ENCODE measurements at regions of chr12 and their contacts with region 1.

Region 1: DNA sequence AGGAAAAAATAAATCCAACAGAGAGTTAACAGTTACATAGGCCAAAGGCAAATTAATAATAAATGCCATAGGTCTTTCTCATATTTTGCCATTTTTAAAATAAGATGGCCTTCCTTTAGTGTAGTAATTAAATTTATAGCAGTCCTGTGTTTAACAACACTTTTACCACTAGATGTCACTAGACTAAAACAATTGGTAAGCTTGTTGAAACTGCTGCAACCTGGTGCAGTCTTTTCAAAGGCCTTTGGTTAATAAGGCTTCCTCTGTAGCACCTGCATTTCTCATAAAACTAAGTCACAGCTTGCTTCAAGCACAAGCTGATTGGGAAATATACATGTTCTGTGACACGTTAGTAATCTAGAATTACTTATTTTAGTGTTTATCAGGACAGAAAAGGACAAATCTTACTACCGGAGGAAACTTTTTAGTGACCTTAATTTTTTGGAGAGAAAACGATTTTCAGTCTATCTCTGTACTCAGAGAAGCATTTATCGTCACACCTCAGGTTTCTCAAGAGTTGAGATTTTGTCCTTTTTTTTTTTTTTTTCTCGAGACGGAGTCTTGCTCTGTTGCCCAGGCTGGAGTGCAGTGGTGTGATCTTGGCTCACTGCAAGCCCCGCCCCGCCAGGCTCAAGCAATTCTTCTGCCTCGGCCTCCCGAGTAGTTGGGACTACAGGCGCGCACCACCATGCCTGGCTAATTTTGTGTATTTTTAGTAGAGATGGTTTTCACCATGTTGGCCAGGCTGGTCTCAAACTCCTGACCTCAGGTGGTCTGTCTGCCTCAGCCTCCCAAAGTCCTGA is 20.0 kb downstream of the BORCS5 start:
- DNase-seq: no peak
- H3K4me3 ChIP-seq: no peak overlapping the region
- H3K27ac ChIP-seq: no peak overlapping the region
- H3K4me1 ChIP-seq: peaks cover 6% of the 10 kb centered on the region
- H3K27me3 ChIP-seq: no peaks in the 10 kb centered on the region
- CTCF ChIP-seq: peak; percentile 72

Region 2: GRCh38 chr12:12467688-12468261 is 90.9 kb after region 1 on chr12:
- intact Hi-C with region 1: no loop called
- DNase-seq: no peak
- H3K4me3 ChIP-seq: no peak overlapping the region
- H3K27ac ChIP-seq: no peak overlapping the region
- H3K4me1 ChIP-seq: no peaks in the 10 kb centered on the region
- H3K27me3 ChIP-seq: no peaks in the 10 kb centered on the region
- CTCF ChIP-seq: no peak

Region 3: GRCh38 chr12:12606781-12607589 is 230.1 kb after region 1 on chr12:
- intact Hi-C with region 1: no loop called
- DNase-seq: no peak
- H3K4me3 ChIP-seq: no peak overlapping the region
- H3K27ac ChIP-seq: no peak overlapping the region
- H3K4me1 ChIP-seq: no peaks in the 10 kb centered on the region
- H3K27me3 ChIP-seq: no peaks in the 10 kb centered on the region
- CTCF ChIP-seq: no peak

Region 4: DNA sequence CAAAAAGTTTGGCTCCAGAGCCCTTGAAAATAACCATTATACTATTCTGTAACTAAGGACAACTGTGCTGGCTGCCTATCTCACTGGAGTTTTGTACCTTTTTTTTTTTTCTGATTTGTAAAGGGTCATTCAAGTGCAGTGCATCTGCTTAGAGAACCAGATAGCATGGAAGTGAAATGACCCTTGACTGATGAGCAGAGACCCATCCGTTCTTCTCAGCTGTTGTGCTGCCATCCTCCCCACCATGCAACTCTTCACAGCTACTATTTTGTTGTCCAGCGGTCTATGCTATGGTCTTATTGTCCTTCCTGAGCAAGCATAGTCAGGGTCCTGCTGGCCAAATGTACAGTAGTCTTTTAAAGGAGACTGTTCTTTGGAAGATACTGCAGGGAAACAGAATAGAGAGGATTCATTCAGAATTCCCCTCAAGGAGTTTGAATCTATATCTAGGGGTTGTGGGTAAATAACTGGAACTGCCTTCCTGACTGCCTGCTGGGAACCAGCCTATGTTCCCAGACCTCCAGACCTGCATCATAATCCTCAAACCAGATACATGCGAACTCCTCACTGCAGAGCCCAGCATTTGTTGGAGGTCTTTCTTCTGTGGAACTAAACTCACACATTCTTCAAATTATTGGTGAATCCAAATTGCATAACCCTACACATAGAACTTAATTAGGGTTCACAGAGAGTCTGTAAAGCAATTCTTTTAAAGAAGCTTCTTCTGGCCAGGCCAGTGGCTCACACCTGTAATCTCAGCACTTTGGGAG is 278.0 kb after region 1 on chr12:
- intact Hi-C with region 1: loop called (anchors 5 kb)
- DNase-seq: no peak
- H3K4me3 ChIP-seq: no peak overlapping the region
- H3K27ac ChIP-seq: no peak overlapping the region
- H3K4me1 ChIP-seq: no peaks in the 10 kb centered on the region
- H3K27me3 ChIP-seq: no peaks in the 10 kb centered on the region
- CTCF ChIP-seq: no peak

Region 5: DNA sequence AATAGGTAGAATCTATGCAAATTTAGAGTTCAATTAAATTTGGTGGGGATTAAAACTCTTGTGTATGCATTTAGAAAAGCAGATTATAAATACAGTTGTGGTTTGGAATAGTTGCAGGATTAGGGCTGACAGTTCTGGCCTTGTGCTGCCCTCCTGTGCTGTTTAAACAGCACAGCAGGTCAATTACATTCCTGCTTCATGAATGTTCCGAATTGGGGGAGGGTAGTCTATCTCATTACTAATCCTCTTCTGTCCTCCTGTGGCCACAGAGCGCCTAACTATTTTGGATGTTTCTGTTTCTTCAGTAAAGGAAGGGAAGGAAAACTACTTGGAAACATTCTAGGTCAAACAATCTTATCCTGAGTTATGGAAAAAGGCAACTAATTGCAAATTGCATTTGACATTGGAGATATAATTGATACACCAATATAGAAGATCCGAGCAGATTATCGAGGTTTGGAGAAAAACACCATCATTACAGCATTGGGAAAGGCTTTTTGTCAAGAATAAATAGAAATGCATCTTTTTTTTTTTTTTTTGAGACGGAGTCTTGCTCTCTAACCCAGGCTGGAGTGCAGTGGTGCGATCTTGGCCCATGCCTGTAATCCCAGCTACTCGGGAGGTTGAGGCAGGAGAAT is 327.9 kb after region 1 on chr12:
- intact Hi-C with region 1: loop called (anchors 5 kb)
- DNase-seq: peak; percentile 66
- H3K4me3 ChIP-seq: no peak overlapping the region
- H3K27ac ChIP-seq: peak overlapping the region; percentile 61
- H3K4me1 ChIP-seq: peaks cover 7% of the 10 kb centered on the region
- H3K27me3 ChIP-seq: no peaks in the 10 kb centered on the region
- CTCF ChIP-seq: peak; percentile 74

Region 6: GRCh38 chr12:12788675-12789580 is 412.1 kb after region 1 on chr12:
- intact Hi-C with region 1: no loop called
- DNase-seq: peak; percentile 82
- H3K4me3 ChIP-seq: no peak overlapping the region
- H3K27ac ChIP-seq: no peak overlapping the region
- H3K4me1 ChIP-seq: peaks cover 6% of the 10 kb centered on the region
- H3K27me3 ChIP-seq: no peaks in the 10 kb centered on the region
- CTCF ChIP-seq: peak; percentile 69